Activated CD4-positive, alpha-beta memory T cell treated with anti-CD3 and anti-CD28 coated beads, Interleukin-2, amount 10 ng/mL, durations not matched to agents 7 days and 5 days (primary cell): ENCODE measurements at regions of chr5 and their contacts with region 1.

Region 1: GRCh38 chr5:54944364-54944763 is 41.0 kb downstream of the ESM1 start:
- DNase-seq: peak; percentile 43
- H3K4me3 Mint-ChIP-seq: no peak overlapping the region
- H3K27ac Mint-ChIP-seq: no peak overlapping the region
- H3K4me1 Mint-ChIP-seq: peaks cover 10% of the 10 kb centered on the region
- H3K27me3 Mint-ChIP-seq: peaks cover 2% of the 10 kb centered on the region

Region 2: DNA sequence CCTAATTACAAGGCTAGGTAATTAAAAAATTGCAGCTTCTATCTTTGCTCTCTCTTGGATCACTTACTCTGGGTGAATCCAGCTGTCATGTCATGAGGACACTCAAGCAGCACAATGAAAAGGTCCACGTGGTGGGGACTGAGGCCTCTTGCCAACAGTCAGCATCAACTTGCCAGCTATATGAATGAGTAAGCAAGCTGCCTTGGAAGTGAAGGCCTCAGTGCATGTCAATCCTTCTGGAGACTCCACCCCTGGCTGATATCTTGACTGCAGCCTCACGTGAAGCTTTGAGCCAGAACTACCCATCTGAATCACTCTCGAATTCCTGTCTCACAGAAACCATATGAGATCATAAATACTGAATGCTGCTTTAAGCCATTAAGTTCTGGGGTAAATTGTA is 286.4 kb before region 1 on chr5:
- CTCF ChIA-PET with region 1: no interaction called
- POLR2A ChIA-PET with region 1: no interaction called
- DNase-seq: no peak
- H3K4me3 Mint-ChIP-seq: no peak overlapping the region
- H3K27ac Mint-ChIP-seq: no peak overlapping the region
- H3K4me1 Mint-ChIP-seq: peaks cover 22% of the 10 kb centered on the region
- H3K27me3 Mint-ChIP-seq: no peaks in the 10 kb centered on the region

Region 3: GRCh38 chr5:54927097-54927746 is 17.1 kb before region 1 on chr5:
- CTCF ChIA-PET with region 1: interaction called, 16 read pairs
- POLR2A ChIA-PET with region 1: no interaction called
- DNase-seq: no peak
- H3K4me3 Mint-ChIP-seq: no peak overlapping the region
- H3K27ac Mint-ChIP-seq: peak overlapping the region; percentile 27
- H3K4me1 Mint-ChIP-seq: peaks cover 18% of the 10 kb centered on the region
- H3K27me3 Mint-ChIP-seq: peaks cover 16% of the 10 kb centered on the region

Region 4: GRCh38 chr5:54969856-54970828 is 25.8 kb after region 1 on chr5:
- CTCF ChIA-PET with region 1: interaction called, 18 read pairs
- POLR2A ChIA-PET with region 1: interaction called, 5 read pairs
- DNase-seq: no peak
- H3K4me3 Mint-ChIP-seq: no peak overlapping the region
- H3K27ac Mint-ChIP-seq: no peak overlapping the region
- H3K4me1 Mint-ChIP-seq: no peaks in the 10 kb centered on the region
- H3K27me3 Mint-ChIP-seq: peaks cover 11% of the 10 kb centered on the region

Region 5: DNA sequence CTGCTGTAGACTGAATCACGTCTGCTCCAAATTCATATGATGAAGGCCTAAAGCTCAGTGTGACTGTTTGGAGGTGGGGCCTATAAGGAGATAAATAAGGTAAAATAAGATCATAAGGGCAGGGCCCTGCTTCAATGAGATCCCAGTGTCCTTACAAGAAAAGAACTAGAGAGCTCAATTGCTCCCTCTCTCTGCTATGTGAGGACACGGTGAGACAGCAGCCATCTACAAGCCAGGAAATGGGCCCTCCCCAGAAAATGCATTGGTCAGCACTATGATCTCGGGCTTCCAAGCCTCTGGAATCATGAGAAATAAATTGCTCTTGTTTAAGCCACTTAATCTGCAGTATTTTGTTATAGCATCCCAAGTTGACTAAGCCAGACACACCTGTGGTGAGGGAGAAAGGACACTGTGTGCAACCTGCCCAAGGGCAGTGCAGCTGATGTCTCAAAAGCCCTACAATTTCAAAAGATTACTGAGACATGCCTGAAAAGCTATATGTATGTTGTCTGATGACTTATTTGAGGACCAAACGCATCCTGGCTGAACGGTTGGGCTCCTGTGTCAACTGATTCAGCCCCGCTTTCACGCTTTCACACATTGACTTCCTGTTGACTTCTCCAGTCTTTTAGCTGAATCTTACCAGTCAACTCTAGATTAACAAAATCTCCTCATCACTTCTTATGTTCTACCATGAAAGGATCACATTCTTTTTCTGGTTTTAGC is 92.8 kb after region 1 on chr5:
- CTCF ChIA-PET with region 1: interaction called, 25 read pairs
- POLR2A ChIA-PET with region 1: interaction called, 14 read pairs
- DNase-seq: peak; percentile 85
- H3K4me3 Mint-ChIP-seq: no peak overlapping the region
- H3K27ac Mint-ChIP-seq: peak overlapping the region; percentile 98
- H3K4me1 Mint-ChIP-seq: peaks cover 53% of the 10 kb centered on the region
- H3K27me3 Mint-ChIP-seq: no peaks in the 10 kb centered on the region

Region 6: DNA sequence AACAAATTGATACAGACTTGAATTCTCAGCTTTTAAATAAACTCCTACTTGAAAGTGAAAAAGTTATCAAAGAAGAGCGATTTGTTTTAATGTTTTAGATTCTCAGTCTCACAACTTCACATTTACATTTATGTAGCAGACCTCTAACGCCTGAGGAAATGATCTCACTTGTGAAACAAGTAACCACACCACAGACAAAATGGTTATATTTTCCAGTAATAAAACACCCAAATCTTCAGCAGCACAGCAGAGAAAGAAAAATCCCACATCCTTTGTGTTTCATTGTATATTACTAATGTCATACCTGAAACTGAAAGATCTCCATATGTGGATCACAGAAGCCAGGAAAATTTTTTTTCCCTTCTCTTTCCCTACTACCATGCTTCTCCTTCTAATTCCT is 128.3 kb after region 1 on chr5:
- CTCF ChIA-PET with region 1: interaction called, 11 read pairs
- POLR2A ChIA-PET with region 1: interaction called, 8 read pairs
- DNase-seq: no peak
- H3K4me3 Mint-ChIP-seq: peak overlapping the region; percentile 6
- H3K27ac Mint-ChIP-seq: peak overlapping the region; percentile 91
- H3K4me1 Mint-ChIP-seq: peaks cover 48% of the 10 kb centered on the region
- H3K27me3 Mint-ChIP-seq: no peaks in the 10 kb centered on the region

Region 7: GRCh38 chr5:55146543-55147151 is 202.3 kb after region 1 on chr5:
- CTCF ChIA-PET with region 1: interaction called, 66 read pairs
- POLR2A ChIA-PET with region 1: interaction called, 5 read pairs
- DNase-seq: peak; percentile 89
- H3K4me3 Mint-ChIP-seq: no peak overlapping the region
- H3K27ac Mint-ChIP-seq: peak overlapping the region; percentile 3
- H3K4me1 Mint-ChIP-seq: peaks cover 31% of the 10 kb centered on the region
- H3K27me3 Mint-ChIP-seq: peaks cover 21% of the 10 kb centered on the region

Region 8: GRCh38 chr5:55313870-55314617 is 369.7 kb after region 1 on chr5:
- CTCF ChIA-PET with region 1: no interaction called
- POLR2A ChIA-PET with region 1: no interaction called
- DNase-seq: no peak
- H3K4me3 Mint-ChIP-seq: no peak overlapping the region
- H3K27ac Mint-ChIP-seq: no peak overlapping the region
- H3K4me1 Mint-ChIP-seq: peaks cover 32% of the 10 kb centered on the region
- H3K27me3 Mint-ChIP-seq: no peaks in the 10 kb centered on the region